Activated CD8-positive, alpha-beta T cell treated with anti-CD3 and anti-CD28 coated beads, Interleukin-2, amount 10 ng/mL, durations not matched to agents 7 days and 5 days (primary cell): ENCODE measurements at regions of chr3 and their contacts with region 1.

Region 1: GRCh38 chr3:112642912-112643506 is 2.1 kb upstream of the CCDC80 start:
- DNase-seq: peak; percentile 92
- ATAC-seq: peak; percentile 100
- H3K4me3 Mint-ChIP-seq: peak overlapping the region; percentile 59
- H3K27ac Mint-ChIP-seq: peak overlapping the region; percentile 64
- H3K4me1 Mint-ChIP-seq: peaks cover 21% of the 10 kb centered on the region
- H3K27me3 Mint-ChIP-seq: peaks cover 10% of the 10 kb centered on the region

Region 2: DNA sequence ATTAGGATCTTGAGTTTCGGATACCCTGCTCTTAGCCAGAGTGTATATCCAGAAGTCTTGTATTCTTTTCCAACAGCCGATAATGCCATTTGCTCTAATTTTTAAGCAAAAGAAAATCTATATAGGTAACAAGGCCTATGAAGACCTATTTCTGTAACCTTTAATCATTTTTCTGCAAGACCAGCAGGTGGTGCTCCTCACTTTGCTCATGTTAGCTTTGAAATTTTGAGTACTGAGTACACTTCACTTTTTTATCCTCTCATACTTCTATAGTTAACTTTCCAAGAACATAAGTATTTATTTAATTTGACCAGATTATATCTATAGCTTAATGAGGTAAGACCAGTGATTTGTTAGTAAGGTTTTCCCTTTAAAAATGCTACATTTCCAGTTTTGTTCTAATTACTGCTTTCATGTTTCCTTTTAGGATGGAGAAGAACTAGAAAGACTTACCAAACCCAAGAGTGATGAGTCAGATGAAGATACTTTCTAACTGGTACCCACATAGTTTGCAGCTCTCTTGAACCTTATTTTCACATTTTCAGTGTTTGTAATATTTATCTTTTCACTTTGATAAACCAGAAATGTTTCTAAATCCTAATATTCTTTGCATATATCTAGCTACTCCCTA is 60.6 kb before region 1 on chr3:
- CTCF ChIA-PET with region 1: interaction called, 61 read pairs
- POLR2A ChIA-PET with region 1: no interaction called
- DNase-seq: peak; percentile 63
- ATAC-seq: no peak
- H3K4me3 Mint-ChIP-seq: no peak overlapping the region
- H3K27ac Mint-ChIP-seq: no peak overlapping the region
- H3K4me1 Mint-ChIP-seq: peaks cover under 1% of the 10 kb centered on the region
- H3K27me3 Mint-ChIP-seq: no peaks in the 10 kb centered on the region

Region 3: DNA sequence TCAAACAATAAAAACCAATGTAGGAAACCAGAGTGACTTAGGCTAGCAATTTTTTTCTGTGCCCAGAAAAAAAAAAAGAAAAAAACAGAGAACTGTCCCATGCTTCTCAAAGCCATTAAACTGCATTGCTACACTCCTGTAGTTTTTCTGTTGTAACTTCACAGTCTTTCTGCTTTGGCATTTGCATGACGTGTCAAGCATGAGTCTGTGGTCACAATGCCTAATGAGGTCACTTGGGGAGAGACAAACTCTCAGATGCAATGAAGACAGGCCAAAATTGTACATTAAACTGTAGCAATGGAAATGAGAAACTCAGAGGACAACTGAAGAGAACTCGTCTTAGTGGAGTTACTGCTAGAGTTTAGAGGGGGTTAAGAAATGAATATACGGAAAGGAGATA is 32.9 kb before region 1 on chr3:
- CTCF ChIA-PET with region 1: no interaction called
- POLR2A ChIA-PET with region 1: no interaction called
- DNase-seq: no peak
- ATAC-seq: no peak
- H3K4me3 Mint-ChIP-seq: no peak overlapping the region
- H3K27ac Mint-ChIP-seq: no peak overlapping the region
- H3K4me1 Mint-ChIP-seq: peaks cover 6% of the 10 kb centered on the region
- H3K27me3 Mint-ChIP-seq: peaks cover 15% of the 10 kb centered on the region

Region 4: DNA sequence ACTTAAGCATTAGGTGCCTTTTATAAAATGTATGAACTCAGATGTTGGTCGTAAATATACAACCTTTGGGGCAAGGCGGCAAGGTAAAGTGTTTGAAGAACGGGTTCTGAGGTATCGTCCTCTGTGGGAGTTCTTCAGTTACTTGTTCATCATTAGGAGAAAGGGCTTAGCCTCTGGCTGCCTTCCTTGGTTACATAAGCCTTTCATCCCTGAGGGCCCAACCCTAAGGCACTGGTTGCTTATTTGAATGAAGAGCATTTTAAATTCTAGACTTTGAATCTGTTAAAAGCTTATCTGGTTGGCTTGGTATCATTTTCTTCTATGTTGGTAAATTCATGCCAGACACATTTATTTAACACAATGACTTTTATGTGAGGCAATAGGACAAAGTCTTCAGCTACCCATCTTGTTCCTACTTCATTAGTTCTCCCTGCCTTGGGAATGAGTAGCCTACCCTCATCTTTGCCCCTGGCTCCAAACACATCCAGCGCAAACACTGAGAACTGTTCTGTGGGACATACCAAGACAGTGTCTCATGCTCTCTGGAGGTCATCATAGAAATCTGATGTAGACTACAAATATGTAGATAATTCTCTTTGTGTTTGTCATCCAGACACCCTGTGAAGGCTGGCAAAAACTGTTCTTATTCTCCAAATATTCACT is 10.3 kb after region 1 on chr3:
- CTCF ChIA-PET with region 1: interaction called, 32 read pairs
- POLR2A ChIA-PET with region 1: interaction called, 3 read pairs
- DNase-seq: no peak
- ATAC-seq: no peak
- H3K4me3 Mint-ChIP-seq: no peak overlapping the region
- H3K27ac Mint-ChIP-seq: no peak overlapping the region
- H3K4me1 Mint-ChIP-seq: peaks cover 18% of the 10 kb centered on the region
- H3K27me3 Mint-ChIP-seq: peaks cover 9% of the 10 kb centered on the region

Region 5: GRCh38 chr3:112699436-112699978 is 56.5 kb after region 1 on chr3:
- CTCF ChIA-PET with region 1: interaction called, 29 read pairs
- POLR2A ChIA-PET with region 1: no interaction called
- DNase-seq: no peak
- ATAC-seq: no peak
- H3K4me3 Mint-ChIP-seq: no peak overlapping the region
- H3K27ac Mint-ChIP-seq: no peak overlapping the region
- H3K4me1 Mint-ChIP-seq: no peaks in the 10 kb centered on the region
- H3K27me3 Mint-ChIP-seq: peaks cover 35% of the 10 kb centered on the region

Region 6: GRCh38 chr3:112973325-112974177 is 330.5 kb after region 1 on chr3:
- CTCF ChIA-PET with region 1: interaction called, 110 read pairs
- POLR2A ChIA-PET with region 1: interaction called, 3 read pairs
- DNase-seq: peak; percentile 60
- ATAC-seq: peak; percentile 89
- H3K4me3 Mint-ChIP-seq: peak overlapping the region; percentile 79
- H3K27ac Mint-ChIP-seq: peak overlapping the region; percentile 84
- H3K4me1 Mint-ChIP-seq: peaks cover 53% of the 10 kb centered on the region
- H3K27me3 Mint-ChIP-seq: no peaks in the 10 kb centered on the region

Region 7: GRCh38 chr3:112990672-112991602 is 347.9 kb after region 1 on chr3 and contains the start of gene GTPBP8:
- CTCF ChIA-PET with region 1: interaction called, 19 read pairs
- POLR2A ChIA-PET with region 1: interaction called, 4 read pairs
- DNase-seq: peak; percentile 90
- ATAC-seq: peak; percentile 95
- H3K4me3 Mint-ChIP-seq: peak within 1 kb of the TSS; percentile 93
- H3K27ac Mint-ChIP-seq: peak within 1 kb of the TSS; percentile 98
- H3K4me1 Mint-ChIP-seq: peaks cover 58% of the 10 kb centered on the region
- H3K27me3 Mint-ChIP-seq: no peaks in the 10 kb centered on the region
- total RNA-seq, gene GTPBP8: 24.3 to 24.5 TPM

Region 8: DNA sequence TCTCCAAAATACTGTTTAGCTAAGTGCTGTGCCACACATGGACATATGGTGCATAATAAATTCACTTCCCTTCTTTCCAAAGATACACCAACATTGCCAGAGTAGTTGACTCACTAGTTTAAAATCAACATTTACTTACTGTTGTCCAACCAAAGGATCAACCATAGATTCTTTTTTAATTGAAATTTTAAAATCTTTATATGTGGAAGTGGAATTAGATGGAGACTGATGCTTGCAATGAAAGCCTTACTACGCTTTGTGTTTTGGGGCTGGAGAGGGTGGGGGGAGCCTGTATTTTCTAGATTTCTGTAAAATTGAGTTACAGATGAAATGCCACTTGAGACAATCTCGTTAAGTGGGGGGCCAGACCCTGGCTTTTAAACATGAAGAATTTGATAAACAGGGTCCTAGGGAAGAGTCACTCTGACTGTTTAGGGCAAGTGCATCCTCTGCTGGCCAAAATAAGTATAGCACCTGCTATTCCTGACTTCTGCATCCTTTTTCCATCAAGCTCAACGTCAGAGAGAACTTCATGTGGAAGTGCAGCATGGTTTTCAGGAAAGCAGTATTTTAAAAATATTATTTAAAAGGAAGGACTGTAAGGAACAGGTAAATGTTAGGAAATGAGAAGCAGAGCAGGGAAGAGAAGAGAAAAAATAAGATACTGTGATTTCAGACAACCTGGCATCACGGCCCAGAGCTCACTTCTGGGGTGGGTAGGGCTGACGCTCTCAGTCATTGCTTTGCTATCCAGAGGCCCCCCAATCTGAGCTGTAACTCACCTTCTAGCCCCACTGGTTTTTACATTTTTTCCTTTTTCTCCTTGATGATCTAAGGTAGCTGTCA is 645.0 kb after region 1 on chr3:
- CTCF ChIA-PET with region 1: interaction called, 12 read pairs
- POLR2A ChIA-PET with region 1: no interaction called
- DNase-seq: peak; percentile 62
- ATAC-seq: no peak
- H3K4me3 Mint-ChIP-seq: no peak overlapping the region
- H3K27ac Mint-ChIP-seq: no peak overlapping the region
- H3K4me1 Mint-ChIP-seq: no peaks in the 10 kb centered on the region
- H3K27me3 Mint-ChIP-seq: no peaks in the 10 kb centered on the region